Right lobe of liver (tissue), 6 donors: ENCODE measurements at regions of chr17 and their contacts with region 1.

Region 1: DNA sequence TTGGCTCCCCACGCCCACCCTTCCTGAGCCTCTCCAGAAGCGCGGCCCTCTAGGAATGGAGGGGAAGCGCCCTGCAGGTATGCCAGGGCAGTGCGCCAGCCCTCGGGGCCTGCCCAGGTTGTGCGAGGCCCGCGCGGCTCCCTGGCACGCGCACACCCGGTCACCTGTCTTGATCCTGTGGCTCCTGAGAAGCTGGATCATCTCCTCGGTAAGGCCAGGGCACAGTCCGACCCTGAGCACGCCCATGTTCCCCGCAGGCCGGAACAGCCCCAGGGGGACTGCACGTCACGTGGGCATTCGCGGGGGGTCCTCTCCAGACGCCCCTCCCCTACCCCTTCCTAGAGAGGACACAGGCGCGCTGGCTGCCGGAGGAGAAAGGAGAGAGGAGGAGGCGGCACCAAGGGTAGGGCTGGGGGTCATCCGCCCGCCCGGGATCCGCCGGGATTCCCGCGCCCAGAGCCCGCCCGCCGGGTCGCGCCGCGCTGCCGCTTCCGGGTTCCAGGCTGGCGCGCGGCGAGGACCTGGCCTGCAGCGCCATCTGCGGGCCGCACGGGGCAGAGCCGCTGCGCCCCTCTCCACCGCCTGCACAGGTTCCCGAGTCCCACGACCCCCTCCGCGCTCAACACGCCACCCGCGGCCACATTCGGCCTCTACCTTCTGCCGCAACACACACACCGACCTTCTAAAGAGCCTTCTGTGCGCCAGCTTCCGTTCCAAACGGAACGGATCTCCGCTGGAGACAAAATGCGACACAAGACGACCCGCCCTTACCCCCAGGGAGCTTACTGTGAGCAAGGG is at the start of gene RAD51D:
- DNase-seq: peak; percentile 76 to 81 (median 77)
- ATAC-seq: peak; percentile 97 to 99 (median 98)
- H3K4me3 ChIP-seq: peak within 1 kb of the TSS; percentile 80 to 91 (median 90)
- H3K27ac ChIP-seq: peak within 1 kb of the TSS; percentile 56 to 59 (median 56)
- H3K4me1 ChIP-seq: peaks cover 0 to 9% (median 4%) of the 10 kb centered on the region in 4 donors
- H3K27me3 ChIP-seq: no peaks in the 10 kb centered on the region
- CTCF ChIP-seq: peak; percentile 88 to 99 (median 92)
- POLR2A ChIP-seq: peak; percentile 39
- total RNA-seq, gene RAD51D: 3.9 to 5.5 (median 4.3) TPM

Region 2: GRCh38 chr17:34420254-34420766 is 699.3 kb before region 1 on chr17:
- intact Hi-C with region 1: loop called in 1 of 2 experiments (anchors 10 kb)
- DNase-seq: peak in 2 of 3 donors; percentile 39 to 62
- ATAC-seq: peak; percentile 70 to 91 (median 81)
- H3K4me3 ChIP-seq: no peak overlapping the region
- H3K27ac ChIP-seq: no peak overlapping the region
- H3K4me1 ChIP-seq: no peaks in the 10 kb centered on the region
- H3K27me3 ChIP-seq: no peaks in the 10 kb centered on the region
- CTCF ChIP-seq: peak; percentile 86 to 96 (median 94)
- POLR2A ChIP-seq: no peak

Region 3: DNA sequence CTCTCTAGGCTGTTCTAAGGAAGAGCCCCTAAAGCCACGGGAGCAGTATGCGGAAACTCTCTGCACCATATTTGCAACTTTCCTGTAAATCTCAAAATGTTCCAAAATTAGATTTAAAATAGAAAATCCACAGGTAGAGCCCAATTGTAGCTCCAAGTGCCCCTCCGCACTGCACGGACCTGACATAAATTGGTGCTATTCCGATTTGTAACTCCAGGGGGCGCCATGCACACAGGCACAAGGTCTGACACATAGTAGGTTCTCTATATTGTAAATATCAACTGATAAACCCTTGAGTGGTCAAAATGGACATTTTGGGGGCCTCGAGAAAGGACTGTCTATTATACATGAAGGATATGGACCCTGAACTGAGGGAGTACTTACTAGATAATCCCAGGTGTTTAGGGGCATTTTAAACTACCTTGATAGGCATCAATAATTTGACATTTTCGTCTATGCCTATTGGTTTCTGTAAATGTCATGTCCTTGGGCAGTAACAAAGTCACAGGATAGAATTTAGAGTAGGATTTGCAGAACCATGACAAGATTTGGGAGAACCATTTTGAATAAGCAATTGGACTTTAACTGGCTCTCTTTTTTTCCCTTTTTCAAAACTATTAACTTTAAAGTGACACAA is 576.7 kb before region 1 on chr17:
- intact Hi-C with region 1: loop called in 1 of 2 experiments (anchors 10 kb)
- DNase-seq: no peak
- ATAC-seq: peak in 3 of 4 donors; percentile 47 to 58 (median 50)
- H3K4me3 ChIP-seq: no peak overlapping the region
- H3K27ac ChIP-seq: no peak overlapping the region
- H3K4me1 ChIP-seq: no peaks in the 10 kb centered on the region
- H3K27me3 ChIP-seq: no peaks in the 10 kb centered on the region
- CTCF ChIP-seq: peak; percentile 71 to 85 (median 79)
- POLR2A ChIP-seq: no peak

Region 4: DNA sequence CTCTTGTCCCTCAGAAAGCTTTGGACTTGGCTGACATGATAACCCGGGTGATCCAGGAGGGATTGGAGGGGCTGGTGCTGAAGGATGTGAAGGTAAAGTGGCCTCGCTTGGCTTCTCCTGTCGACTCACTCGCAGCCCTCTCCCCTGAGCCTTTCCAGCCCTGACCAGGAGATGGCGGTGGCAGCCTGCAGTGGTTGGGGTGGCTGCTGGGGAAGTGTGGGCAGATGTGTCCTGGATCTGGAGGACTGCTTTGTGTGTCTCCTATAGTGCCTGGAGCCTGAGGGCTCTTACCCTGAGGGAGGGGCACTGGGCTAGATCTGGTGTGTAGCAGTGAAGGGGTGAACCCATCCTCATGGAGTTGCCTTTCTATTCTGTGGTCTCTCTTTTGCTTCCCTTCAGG is 121.4 kb before region 1 on chr17:
- intact Hi-C with region 1: loop called in 1 of 2 experiments (anchors 10 kb)
- DNase-seq: peak; percentile 76 to 83 (median 78)
- ATAC-seq: peak; percentile 93 to 97 (median 94)
- H3K4me3 ChIP-seq: no peak overlapping the region
- H3K27ac ChIP-seq: no peak overlapping the region
- H3K4me1 ChIP-seq: no peaks in the 10 kb centered on the region
- H3K27me3 ChIP-seq: no peaks in the 10 kb centered on the region
- CTCF ChIP-seq: peak; percentile 81 to 90 (median 86)
- POLR2A ChIP-seq: no peak